Upper lobe of right lung (tissue), 1 donor: ENCODE measurements at regions of chr15 and their contacts with region 1.

Region 1: GRCh38 chr15:78234515-78235040 is at the start of gene ACSBG1:
- DNase-seq: no peak
- ATAC-seq: no peak
- H3K4me3 ChIP-seq: no peak within 1 kb of the TSS
- H3K27ac ChIP-seq: no peak within 1 kb of the TSS
- H3K4me1 ChIP-seq: no peaks in the 10 kb centered on the region
- H3K27me3 ChIP-seq: no peaks in the 10 kb centered on the region
- CTCF ChIP-seq: no peak
- total RNA-seq, gene ACSBG1: not detected

Region 2: DNA sequence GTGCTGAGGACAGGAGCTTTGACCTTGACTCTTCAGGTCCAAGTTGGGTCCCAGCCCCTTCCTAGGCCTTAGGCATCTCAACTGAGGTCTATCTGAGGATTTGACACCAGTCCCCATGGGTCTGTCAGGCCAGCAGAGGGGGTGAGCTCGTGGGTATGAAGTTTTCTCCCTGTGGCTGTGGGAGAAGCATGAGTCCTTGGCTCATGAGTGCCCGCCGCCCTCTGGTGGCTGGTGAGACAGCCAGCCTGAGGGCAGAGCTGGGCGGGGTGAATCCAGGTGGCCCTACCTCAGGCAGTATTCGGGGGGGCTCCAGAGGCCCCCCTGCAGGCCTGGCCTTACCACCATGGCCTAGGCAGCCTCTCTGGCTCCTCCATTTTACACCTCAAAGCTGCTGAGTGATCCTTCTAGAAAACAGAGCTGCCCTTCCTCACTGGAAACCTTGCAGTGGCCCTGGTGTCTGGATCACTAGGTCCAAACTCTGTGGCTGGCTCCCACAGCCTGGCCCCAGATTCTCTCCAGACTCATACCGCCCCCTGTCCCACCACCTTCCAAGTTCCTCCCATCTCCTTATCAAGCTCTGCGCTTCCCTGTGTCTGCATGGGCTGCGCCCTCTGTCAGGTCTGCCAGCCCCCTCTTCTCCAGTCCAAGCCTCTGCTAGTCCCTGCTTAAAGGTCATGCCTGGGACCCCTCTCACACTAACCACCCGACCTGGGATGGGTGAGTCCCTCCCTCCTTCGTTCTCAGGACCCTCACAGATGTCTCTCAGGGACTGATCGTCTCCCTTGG is 126.1 kb before region 1 on chr15:
- intact Hi-C with region 1: loop called (anchors 5 kb)
- DNase-seq: peak; percentile 93
- ATAC-seq: peak; percentile 94
- H3K4me3 ChIP-seq: no peak overlapping the region
- H3K27ac ChIP-seq: no peak overlapping the region
- H3K4me1 ChIP-seq: peaks cover 21% of the 10 kb centered on the region
- H3K27me3 ChIP-seq: no peaks in the 10 kb centered on the region
- CTCF ChIP-seq: peak; percentile 93

Region 3: GRCh38 chr15:78170848-78171773 is 63.5 kb before region 1 on chr15:
- intact Hi-C with region 1: no loop called
- DNase-seq: no peak
- ATAC-seq: peak; percentile 46
- H3K4me3 ChIP-seq: no peak overlapping the region
- H3K27ac ChIP-seq: no peak overlapping the region
- H3K4me1 ChIP-seq: no peaks in the 10 kb centered on the region
- H3K27me3 ChIP-seq: no peaks in the 10 kb centered on the region
- CTCF ChIP-seq: no peak